ENCODE measurements at regions of chr5 and their contacts with region 1.

Region 1: DNA sequence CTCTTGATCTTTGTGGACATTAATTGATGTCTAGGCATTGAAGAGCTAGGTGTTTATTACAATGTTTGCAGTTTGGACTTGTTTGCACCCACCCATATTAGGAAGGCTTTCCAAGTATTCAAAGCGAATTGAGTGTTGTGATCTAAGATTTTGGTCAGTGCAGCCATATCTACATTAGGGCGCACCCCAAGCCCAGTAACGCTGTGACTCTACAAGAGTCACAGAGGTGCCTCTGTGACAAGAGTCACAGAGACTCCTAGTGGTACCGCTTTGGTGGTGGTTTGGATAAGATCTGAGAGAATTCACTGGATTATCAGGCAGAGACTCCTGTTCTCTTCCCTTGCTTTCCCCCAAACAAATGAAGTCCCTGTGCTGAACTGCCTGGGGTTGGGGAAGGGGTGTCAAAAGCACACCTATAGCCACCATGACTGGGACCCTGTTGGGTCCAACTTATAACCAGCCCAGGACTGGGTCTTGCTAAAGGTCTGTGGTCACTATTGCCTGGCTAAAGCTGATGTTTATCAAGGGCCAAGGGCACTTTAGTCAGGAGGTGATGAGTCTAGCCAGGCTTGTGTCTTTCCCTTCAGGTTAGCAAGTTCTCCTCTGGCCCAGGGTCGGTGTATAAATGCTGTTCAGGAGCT is 114.1 kb upstream of the RIOK2 start:
- DNase-seq: peak; percentile 11
- ATAC-seq: peak; percentile 100
- H3K4me3 ChIP-seq: no peak overlapping the region
- H3K27ac ChIP-seq: no peak overlapping the region
- H3K4me1 ChIP-seq: no peaks in the 10 kb centered on the region
- H3K27me3 ChIP-seq: no peaks in the 10 kb centered on the region
- CTCF ChIP-seq: peak; percentile 70 to 81 (median 71)
- EP300 ChIP-seq: no peak
- POLR2A ChIP-seq: no peak
- RAD21 ChIP-seq: peak; percentile 84

Region 2: GRCh38 chr5:97224112-97224750 is 73.0 kb before region 1 on chr5:
- CTCF ChIA-PET with region 1: no interaction called
- POLR2A ChIA-PET with region 1: no interaction called
- RAD21 ChIA-PET with region 1: no interaction called
- SMC1A ChIA-PET with region 1: no interaction called
- in situ Hi-C with region 1: no loop called
- intact Hi-C with region 1: no loop called
- DNase-seq: no peak
- ATAC-seq: no peak
- H3K4me3 ChIP-seq: no peak overlapping the region
- H3K27ac ChIP-seq: no peak overlapping the region
- H3K4me1 ChIP-seq: no peaks in the 10 kb centered on the region
- H3K27me3 ChIP-seq: no peaks in the 10 kb centered on the region; a peak in 1 of 4 replicates
- CTCF ChIP-seq: no peak
- EP300 ChIP-seq: no peak
- POLR2A ChIP-seq: no peak
- RAD21 ChIP-seq: no peak

Region 3: DNA sequence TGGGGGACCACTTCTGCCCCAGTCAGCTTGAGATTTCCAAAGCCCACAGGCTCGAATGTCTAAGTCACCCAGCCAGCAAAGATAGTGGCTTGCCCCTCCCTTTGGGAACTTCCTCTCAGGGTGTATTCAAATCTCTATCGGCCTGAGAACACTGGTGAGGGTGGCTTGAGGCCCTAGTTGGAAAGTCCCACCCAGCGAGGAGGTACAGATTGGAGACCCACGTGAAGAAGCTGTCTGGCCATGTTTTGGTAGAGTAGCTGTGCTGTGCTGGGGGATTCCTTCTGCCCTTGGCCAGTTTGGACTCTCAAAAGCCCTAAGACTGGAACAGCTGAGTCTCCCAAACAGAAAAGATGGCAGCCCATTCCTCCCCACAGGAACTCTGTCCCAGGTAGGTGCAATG is 58.6 kb after region 1 on chr5:
- CTCF ChIA-PET with region 1: interaction called, 4 read pairs
- POLR2A ChIA-PET with region 1: no interaction called
- RAD21 ChIA-PET with region 1: interaction called, 5 read pairs
- SMC1A ChIA-PET with region 1: interaction called, 14 read pairs
- in situ Hi-C with region 1: no loop called
- intact Hi-C with region 1: loop called (anchors 5 kb)
- DNase-seq: peak; percentile 74
- ATAC-seq: peak; percentile 90
- H3K4me3 ChIP-seq: peak overlapping the region; percentile 68
- H3K27ac ChIP-seq: peak overlapping the region; percentile 68
- H3K4me1 ChIP-seq: peaks cover 11% of the 10 kb centered on the region
- H3K27me3 ChIP-seq: no peaks in the 10 kb centered on the region
- CTCF ChIP-seq: no peak
- EP300 ChIP-seq: 0 out of 4 replicates have a peak, but pooled peaks of 1 of the 2 experiments have one; percentile 4
- POLR2A ChIP-seq: 0 out of 2 replicates have a peak, but pooled peaks have one; percentile 32
- RAD21 ChIP-seq: no peak

Region 4: DNA sequence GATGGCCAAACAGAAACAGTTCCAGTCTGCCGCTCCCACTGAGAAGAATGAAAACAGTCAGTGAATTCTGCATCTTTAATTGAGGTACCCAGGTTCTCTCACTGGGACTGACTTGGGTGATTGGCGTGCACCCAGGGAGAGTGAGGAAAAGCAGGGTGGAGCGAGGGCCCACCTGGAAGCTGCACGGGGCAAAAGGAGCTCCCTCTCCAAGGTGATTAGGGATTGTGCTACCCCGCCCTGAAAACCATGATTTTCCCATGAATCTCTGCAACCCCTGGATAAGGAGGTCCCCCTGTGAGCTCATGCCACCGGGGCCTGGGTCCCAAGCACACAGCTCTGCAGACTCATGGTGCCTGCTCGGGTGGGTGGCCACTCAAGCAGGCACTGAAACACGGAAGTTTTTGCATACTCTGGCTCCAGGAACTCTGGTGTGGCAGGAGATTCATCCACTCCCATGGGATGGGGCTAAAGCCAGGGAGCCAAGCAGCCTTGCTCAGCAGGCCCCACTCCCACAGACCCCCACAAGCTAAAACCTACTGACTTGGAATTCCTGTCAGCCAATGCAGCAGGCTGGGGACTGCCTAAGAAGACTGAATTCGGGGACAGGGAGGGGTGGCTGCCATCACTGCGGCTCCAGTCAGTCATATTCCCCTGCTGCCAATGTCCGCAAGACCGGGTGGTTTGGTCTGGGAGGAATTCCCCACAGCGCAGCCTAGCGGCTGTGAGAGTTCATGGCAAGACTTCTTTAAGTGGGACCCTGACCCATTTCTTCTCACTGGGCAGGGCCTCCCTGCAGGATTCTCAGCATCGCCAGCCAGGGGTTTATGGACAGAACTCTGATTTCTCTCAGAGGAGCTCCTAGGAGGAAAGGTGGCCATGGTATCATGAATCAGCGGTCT is 824.1 kb after region 1 on chr5:
- CTCF ChIA-PET with region 1: no interaction called
- POLR2A ChIA-PET with region 1: no interaction called
- RAD21 ChIA-PET with region 1: no interaction called
- SMC1A ChIA-PET with region 1: no interaction called
- in situ Hi-C with region 1: no loop called
- intact Hi-C with region 1: loop called (anchors 5 kb)
- DNase-seq: no peak
- ATAC-seq: no peak
- H3K4me3 ChIP-seq: no peak overlapping the region
- H3K27ac ChIP-seq: no peak overlapping the region
- H3K4me1 ChIP-seq: no peaks in the 10 kb centered on the region
- H3K27me3 ChIP-seq: no peaks in the 10 kb centered on the region
- CTCF ChIP-seq: no peak
- EP300 ChIP-seq: no peak
- POLR2A ChIP-seq: no peak
- RAD21 ChIP-seq: no peak

Region 5: DNA sequence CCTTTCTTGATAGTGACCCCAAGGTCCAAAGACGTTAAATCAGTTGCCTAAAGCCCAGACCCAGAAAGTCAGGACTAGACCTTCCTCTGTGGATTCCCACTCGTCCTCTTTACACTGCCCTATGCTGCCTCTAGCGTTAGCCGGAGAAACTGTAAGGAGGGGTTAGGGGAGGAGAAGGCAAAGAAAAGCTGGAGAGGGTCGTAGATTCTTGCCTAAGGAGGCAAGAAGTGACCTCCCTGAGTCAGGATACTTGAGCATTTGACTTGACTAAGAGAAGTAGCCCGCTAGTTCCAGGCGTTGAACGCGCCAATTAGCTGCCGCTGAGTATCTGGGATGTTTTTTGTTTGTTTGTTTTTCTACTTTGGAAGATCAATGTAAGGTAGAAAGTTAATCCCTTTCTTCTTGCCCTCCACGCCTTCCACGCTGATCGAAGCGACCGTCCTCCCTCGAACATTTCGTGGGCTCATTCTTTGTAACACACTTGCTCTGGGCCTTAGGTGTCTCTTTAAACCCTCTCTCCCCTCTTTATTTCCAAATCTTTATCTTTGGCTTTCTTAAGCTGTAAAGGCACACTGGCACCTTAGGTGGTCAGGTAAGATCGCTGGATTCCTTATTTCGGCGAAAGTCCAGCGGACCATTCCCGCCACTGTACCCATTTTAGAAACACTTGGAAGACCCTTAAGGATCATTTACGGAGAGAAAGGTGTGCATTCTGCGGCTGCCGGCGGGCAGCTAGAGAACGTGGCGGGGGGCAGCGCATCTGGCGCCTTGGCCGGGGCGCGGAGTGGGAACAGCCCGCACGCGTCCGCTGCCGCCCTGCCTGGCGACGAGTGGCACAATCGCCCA is 1471.2 kb after region 1 on chr5:
- CTCF ChIA-PET with region 1: interaction called, 16 read pairs
- POLR2A ChIA-PET with region 1: no interaction called
- RAD21 ChIA-PET with region 1: interaction called, 3 read pairs
- SMC1A ChIA-PET with region 1: interaction called, 7 read pairs
- in situ Hi-C with region 1: no loop called
- intact Hi-C with region 1: loop called (anchors 5 kb)
- DNase-seq: no peak
- ATAC-seq: peak; percentile 37
- H3K4me3 ChIP-seq: peak overlapping the region; percentile 79
- H3K27ac ChIP-seq: no peak overlapping the region
- H3K4me1 ChIP-seq: peaks cover 12% of the 10 kb centered on the region
- H3K27me3 ChIP-seq: peaks cover 3 to 9% of the 10 kb centered on the region in 2 experiments; a peak in 3 of 4 replicates
- CTCF ChIP-seq: peak; percentile 82 to 98 (median 93)
- EP300 ChIP-seq: no peak
- POLR2A ChIP-seq: no peak
- RAD21 ChIP-seq: peak; percentile 89

Region 6: DNA sequence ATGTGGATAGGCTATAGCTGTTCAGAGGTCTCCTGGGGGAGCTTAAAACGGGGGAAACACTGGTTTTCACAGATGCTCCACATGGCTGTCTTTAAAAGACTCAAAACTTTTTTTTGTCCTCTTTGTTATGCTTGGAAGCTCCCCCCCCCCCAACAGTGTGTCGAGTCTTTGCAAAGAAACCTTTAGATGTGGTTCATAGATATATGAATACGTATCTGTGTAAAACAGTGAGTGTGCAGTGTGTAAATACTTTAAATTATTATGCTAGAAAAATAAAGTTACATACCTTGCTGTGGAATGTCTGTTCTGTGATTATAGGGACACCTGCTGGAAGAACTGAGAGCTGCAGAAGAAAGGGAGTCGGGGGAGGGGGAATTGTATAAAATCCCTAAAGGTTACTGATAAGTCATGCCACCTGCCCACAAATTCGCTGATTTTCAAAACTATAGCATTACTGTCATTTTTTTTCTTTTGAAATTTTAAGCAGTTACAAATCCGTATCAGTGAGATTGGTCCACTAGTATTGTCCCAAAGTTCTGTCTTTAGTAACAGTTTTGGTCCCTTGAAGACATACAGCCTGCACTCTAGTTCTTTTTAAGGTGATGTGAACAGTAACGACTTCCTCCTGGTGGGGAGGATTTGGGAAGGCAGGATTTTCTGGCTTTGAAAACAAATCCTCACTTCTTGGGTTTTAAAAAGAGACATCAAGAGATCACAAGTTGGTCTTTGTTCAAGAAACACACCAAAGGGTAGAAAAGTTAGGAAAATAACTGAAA is 1499.2 kb after region 1 on chr5:
- CTCF ChIA-PET with region 1: interaction called, 16 read pairs
- POLR2A ChIA-PET with region 1: no interaction called
- RAD21 ChIA-PET with region 1: interaction called, 7 read pairs
- SMC1A ChIA-PET with region 1: interaction called, 9 read pairs
- in situ Hi-C with region 1: no loop called
- intact Hi-C with region 1: no loop called
- DNase-seq: no peak
- ATAC-seq: peak; percentile 90
- H3K4me3 ChIP-seq: no peak overlapping the region
- H3K27ac ChIP-seq: no peak overlapping the region
- H3K4me1 ChIP-seq: no peaks in the 10 kb centered on the region
- H3K27me3 ChIP-seq: no peaks in the 10 kb centered on the region
- CTCF ChIP-seq: peak; percentile 70 to 80 (median 75)
- EP300 ChIP-seq: no peak
- POLR2A ChIP-seq: no peak
- RAD21 ChIP-seq: peak; percentile 89

Measured in GM12878 (cell line).